ENCODE measurements at regions of chr5 and their contacts with region 1.

Region 1: GRCh38 chr5:37054391-37054790 is 177.8 kb downstream of the NIPBL start:
- DNase-seq: no peak
- ATAC-seq: no peak
- H3K4me3 ChIP-seq: no peak overlapping the region
- H3K4me3 Mint-ChIP-seq: no peak overlapping the region
- H3K27ac ChIP-seq: no peak overlapping the region
- H3K27ac Mint-ChIP-seq: peak overlapping the region; percentile 66
- H3K4me1 ChIP-seq: no peaks in the 10 kb centered on the region
- H3K4me1 Mint-ChIP-seq: no peaks in the 10 kb centered on the region
- H3K27me3 ChIP-seq: no peaks in the 10 kb centered on the region
- H3K27me3 Mint-ChIP-seq: no peaks in the 10 kb centered on the region
- CTCF ChIP-seq: no peak

Region 2: DNA sequence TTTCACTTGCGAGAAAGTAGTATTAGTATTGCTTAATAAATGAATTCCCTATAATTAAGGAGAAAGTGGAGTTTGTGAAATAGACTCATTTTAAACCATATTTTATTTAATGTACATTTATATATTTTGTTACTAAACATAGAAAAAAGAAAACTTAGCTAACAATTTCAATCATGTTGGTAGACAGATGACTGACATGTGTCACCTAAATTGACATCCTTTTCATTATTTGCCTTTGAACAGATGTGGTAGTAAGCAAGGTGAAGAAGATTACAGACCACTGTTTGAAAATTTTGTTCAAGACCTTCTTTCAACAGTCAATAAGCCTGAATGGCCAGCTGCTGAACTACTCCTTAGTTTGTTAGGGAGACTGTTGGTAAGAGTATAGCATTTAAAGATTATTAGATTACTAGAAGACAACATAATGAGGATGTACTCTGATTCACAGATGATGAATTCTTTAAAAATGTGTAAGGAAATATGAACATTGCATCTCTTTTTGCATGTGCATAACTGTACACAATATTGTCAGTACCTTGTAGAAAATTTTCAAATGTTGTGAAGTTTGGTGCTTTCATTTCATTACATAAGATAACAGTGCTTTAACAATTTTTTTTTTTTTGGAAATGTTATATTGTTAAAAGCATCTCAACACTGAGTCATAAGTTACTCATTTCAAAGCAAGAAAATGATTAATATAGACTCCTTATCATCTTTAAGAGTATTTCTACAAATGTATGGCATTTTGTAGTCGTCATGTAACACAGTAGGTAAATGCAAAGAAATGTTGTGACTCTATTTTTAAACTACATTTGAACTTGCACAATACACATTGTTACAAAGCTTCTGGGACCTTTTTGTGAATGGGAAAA is 38.4 kb before region 1 on chr5:
- CTCF ChIA-PET with region 1: no interaction called
- POLR2A ChIA-PET with region 1: interaction called, 3 read pairs
- intact Hi-C with region 1: loop called in 1 of 2 experiments (anchors 5 kb)
- DNase-seq: no peak
- ATAC-seq: no peak
- H3K4me3 ChIP-seq: no peak overlapping the region
- H3K4me3 Mint-ChIP-seq: no peak overlapping the region
- H3K27ac ChIP-seq: no peak overlapping the region
- H3K27ac Mint-ChIP-seq: no peak overlapping the region
- H3K4me1 ChIP-seq: no peaks in the 10 kb centered on the region
- H3K4me1 Mint-ChIP-seq: no peaks in the 10 kb centered on the region
- H3K27me3 ChIP-seq: no peaks in the 10 kb centered on the region
- H3K27me3 Mint-ChIP-seq: no peaks in the 10 kb centered on the region
- CTCF ChIP-seq: no peak

Region 3: GRCh38 chr5:37039824-37040223 is 14.6 kb before region 1 on chr5:
- CTCF ChIA-PET with region 1: no interaction called
- POLR2A ChIA-PET with region 1: no interaction called
- intact Hi-C with region 1: loop called in 1 of 2 experiments (anchors 2 kb)
- DNase-seq: no peak
- ATAC-seq: no peak
- H3K4me3 ChIP-seq: no peak overlapping the region
- H3K4me3 Mint-ChIP-seq: no peak overlapping the region
- H3K27ac ChIP-seq: no peak overlapping the region
- H3K27ac Mint-ChIP-seq: no peak overlapping the region
- H3K4me1 ChIP-seq: no peaks in the 10 kb centered on the region
- H3K4me1 Mint-ChIP-seq: no peaks in the 10 kb centered on the region
- H3K27me3 ChIP-seq: no peaks in the 10 kb centered on the region
- H3K27me3 Mint-ChIP-seq: no peaks in the 10 kb centered on the region
- CTCF ChIP-seq: no peak

Measured in CD8-positive, alpha-beta T cell (primary cell).